A549 (cell line): ENCODE measurements at regions of chr5 and their contacts with region 1.

Region 1: GRCh38 chr5:149434162-149435014 is 55.3 kb upstream of the IL17B start:
- DNase-seq: peak; percentile 61 to 88
- ATAC-seq: peak; percentile 56 to 72
- H3K4me3 ChIP-seq: no peak overlapping the region
- H3K27ac ChIP-seq: 0 out of 6 replicates have a peak overlapping the region, but pooled peaks of 1 of the 2 experiments have one; percentile 9
- H3K4me1 ChIP-seq: peaks cover 13% of the 10 kb centered on the region
- CTCF ChIP-seq: peak; percentile 86
- EP300 ChIP-seq: no peak
- POLR2A ChIP-seq: no peak
- RAD21 ChIP-seq: peak; percentile 74

Region 2: DNA sequence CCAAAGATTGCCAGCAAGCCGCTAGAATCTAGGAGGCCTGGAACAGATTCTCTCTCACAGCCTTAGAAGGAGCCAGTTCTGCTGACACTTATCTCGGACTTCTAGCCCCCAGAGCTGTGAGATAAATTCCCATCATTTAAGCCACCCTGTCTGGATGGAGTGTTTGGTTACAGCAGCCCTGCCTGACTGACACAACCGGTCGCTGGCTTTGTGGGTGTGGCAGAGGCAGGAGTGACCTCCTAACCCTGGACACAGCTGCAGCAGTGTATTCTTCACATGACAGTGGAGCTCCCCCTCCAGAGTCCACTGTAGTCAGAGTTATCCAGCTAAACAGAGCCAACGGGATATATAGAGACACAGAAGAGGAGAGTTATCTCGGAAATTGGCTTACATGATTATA is 34.1 kb before region 1 on chr5:
- CTCF ChIA-PET with region 1: interaction called, 1,709 read pairs
- POLR2A ChIA-PET with region 1: interaction called, 3 read pairs
- DNase-seq: no peak
- ATAC-seq: no peak
- H3K4me3 ChIP-seq: no peak overlapping the region
- H3K27ac ChIP-seq: no peak overlapping the region
- H3K4me1 ChIP-seq: peaks cover 19% of the 10 kb centered on the region
- CTCF ChIP-seq: no peak
- EP300 ChIP-seq: no peak
- POLR2A ChIP-seq: no peak
- RAD21 ChIP-seq: no peak

Region 3: GRCh38 chr5:149416987-149417710 is 17.2 kb before region 1 on chr5:
- CTCF ChIA-PET with region 1: interaction called, 58 read pairs
- POLR2A ChIA-PET with region 1: interaction called, 5 read pairs
- DNase-seq: no peak
- ATAC-seq: no peak
- H3K4me3 ChIP-seq: no peak overlapping the region
- H3K27ac ChIP-seq: peak overlapping the region in 1 of 2 experiments; percentile 79; a peak in 2 of 6 replicates
- H3K4me1 ChIP-seq: peaks cover 21% of the 10 kb centered on the region
- CTCF ChIP-seq: no peak
- EP300 ChIP-seq: no peak
- POLR2A ChIP-seq: no peak
- RAD21 ChIP-seq: no peak

Region 4: DNA sequence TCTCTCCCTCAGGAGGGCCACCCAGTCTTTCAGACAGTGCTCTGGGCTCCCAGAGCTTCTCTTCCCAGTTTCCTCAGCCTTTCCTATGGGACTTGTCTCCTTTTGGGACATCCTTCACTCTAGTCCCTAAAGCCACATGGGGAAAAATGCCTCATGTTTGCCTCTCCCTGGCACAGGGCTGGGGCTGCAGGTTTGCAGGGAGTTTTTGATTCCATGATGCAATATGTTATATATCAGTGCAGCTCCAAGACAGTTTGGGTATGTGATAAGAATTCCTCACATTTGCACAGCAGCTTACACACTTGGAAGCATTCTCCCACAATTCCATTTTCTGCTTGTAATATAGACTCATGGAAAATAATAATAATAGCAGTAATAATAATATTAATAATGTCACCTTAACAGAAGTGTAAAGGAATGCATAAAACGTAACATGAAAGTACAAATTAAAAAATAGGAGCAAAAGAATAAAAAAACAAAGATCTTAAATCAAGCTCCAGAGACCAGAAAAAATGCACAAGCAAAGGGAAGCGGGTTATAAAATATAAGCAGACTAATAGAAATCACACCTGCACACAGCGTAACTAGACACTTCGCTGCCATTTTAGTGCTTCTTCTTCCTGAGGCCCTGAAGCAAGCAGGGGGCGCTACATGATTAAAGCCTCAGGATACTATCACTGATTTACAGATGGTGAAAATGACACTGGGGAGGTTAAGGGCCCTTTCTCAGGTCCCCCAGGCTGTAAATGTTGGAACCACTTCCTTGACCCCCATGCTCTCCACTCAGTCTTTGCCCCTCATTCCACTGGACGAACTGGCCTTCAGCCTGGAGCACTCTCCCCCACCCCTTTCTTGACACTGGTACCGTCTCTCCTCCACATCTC is 14.7 kb after region 1 on chr5:
- CTCF ChIA-PET with region 1: interaction called, 87 read pairs
- POLR2A ChIA-PET with region 1: no interaction called
- DNase-seq: peak in 1 of 2 experiments; percentile 60
- ATAC-seq: peak in 1 of 2 experiments; percentile 56; a peak in 3 of 6 replicates
- H3K4me3 ChIP-seq: no peak overlapping the region
- H3K27ac ChIP-seq: peak overlapping the region; percentile 14 to 50; a peak in 3 of 6 replicates
- H3K4me1 ChIP-seq: peaks cover 31% of the 10 kb centered on the region
- CTCF ChIP-seq: peak; percentile 28
- EP300 ChIP-seq: no peak
- POLR2A ChIP-seq: no peak
- RAD21 ChIP-seq: peak; percentile 36 to 53; a peak in 4 of 5 replicates

Region 5: GRCh38 chr5:149581192-149581861 is 146.9 kb after region 1 on chr5 and contains the start of gene ARHGEF37:
- CTCF ChIA-PET with region 1: interaction called, 12 read pairs
- POLR2A ChIA-PET with region 1: no interaction called
- DNase-seq: peak in 1 of 2 experiments; percentile 42
- ATAC-seq: peak; percentile 90
- H3K4me3 ChIP-seq: peak within 1 kb of the TSS; percentile 58
- H3K27ac ChIP-seq: peak within 1 kb of the TSS; percentile 79 to 83
- H3K4me1 ChIP-seq: peaks cover 15% of the 10 kb centered on the region; the same call in 2 of the 3 replicates
- CTCF ChIP-seq: no peak
- EP300 ChIP-seq: no peak
- POLR2A ChIP-seq: peak; percentile 14; the same call in 1 of the 2 replicates
- RAD21 ChIP-seq: no peak
- polyA plus RNA-seq, gene ARHGEF37: 1.5 and 1.7 TPM in 2 replicates